ENCODE measurements at regions of chr7 and their contacts with region 1.

Region 1: DNA sequence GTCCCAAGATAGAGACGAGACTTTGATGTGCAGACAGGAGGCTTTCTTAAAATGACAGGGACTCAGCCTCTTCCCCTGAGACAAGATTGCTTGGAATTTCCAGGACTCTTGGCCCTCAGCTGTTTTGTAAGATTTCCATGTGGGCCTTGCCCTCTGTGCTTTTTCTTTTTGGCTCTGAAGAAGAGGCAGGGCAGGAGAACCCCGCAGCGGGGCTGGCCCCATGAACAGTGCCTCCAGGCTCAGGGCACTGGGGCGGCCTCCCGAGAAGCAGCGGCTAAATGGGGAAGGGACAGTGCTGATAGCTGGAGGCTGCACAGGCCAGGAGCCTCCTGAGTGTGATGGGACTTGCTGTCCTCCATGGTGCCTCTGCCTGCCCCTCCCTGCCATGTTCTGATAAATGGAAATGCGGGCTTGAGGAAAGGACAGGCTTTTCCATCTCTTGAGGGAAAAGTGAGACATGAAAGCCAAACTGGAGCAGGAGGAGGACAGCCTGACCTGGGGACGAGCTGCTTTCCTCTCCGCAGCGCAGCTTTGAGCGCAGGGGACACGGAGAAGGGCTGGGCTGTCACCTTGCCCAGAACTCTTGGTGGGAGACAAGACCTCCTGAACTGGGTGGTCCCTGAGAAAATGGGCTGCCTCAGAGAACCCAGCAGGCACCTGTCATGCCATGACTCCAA is 12.1 kb downstream of the SAP25 start:
- DNase-seq: no peak
- H3K4me3 ChIP-seq: no peak overlapping the region
- H3K27ac ChIP-seq: no peak overlapping the region
- H3K4me1 ChIP-seq: no peaks in the 10 kb centered on the region
- H3K27me3 ChIP-seq: no peaks in the 10 kb centered on the region
- CTCF ChIP-seq: no peak
- POLR2A ChIP-seq: no peak

Region 2: DNA sequence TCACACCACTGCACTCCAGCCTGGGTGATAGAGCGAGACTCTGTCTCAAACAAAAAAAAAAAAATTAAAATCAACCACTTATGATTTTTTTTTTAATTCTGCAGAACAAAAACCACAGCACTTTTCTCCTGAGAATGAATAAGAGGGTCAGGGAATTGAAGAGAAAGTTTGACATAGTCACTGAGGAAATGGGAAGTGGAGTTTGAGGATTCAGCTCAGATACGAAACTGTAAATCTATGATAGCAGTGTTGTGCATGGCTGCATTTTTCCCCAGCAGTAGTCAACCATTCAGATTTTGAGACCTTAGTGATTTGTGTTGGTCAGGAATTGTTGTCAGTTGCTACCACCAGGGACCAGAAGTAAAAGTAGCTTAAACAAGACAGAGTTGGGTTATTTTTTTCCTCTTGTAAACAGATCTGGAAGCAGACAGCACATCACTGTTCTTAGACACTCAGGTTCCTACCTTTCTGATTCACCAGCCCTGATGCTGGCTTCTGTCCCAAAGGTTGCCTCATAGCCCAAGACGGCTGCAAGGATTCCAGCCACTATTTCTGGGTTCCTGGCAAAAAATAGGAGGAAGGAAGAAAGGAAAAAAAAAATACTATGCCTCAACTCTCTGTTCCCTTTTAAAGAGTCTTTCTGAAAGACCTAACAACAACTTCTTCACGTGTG is 168.3 kb before region 1 on chr7:
- intact Hi-C with region 1: no loop called
- DNase-seq: no peak
- H3K4me3 ChIP-seq: no peak overlapping the region
- H3K27ac ChIP-seq: no peak overlapping the region
- H3K4me1 ChIP-seq: no peaks in the 10 kb centered on the region
- H3K27me3 ChIP-seq: no peaks in the 10 kb centered on the region
- CTCF ChIP-seq: no peak
- POLR2A ChIP-seq: no peak

Region 3: DNA sequence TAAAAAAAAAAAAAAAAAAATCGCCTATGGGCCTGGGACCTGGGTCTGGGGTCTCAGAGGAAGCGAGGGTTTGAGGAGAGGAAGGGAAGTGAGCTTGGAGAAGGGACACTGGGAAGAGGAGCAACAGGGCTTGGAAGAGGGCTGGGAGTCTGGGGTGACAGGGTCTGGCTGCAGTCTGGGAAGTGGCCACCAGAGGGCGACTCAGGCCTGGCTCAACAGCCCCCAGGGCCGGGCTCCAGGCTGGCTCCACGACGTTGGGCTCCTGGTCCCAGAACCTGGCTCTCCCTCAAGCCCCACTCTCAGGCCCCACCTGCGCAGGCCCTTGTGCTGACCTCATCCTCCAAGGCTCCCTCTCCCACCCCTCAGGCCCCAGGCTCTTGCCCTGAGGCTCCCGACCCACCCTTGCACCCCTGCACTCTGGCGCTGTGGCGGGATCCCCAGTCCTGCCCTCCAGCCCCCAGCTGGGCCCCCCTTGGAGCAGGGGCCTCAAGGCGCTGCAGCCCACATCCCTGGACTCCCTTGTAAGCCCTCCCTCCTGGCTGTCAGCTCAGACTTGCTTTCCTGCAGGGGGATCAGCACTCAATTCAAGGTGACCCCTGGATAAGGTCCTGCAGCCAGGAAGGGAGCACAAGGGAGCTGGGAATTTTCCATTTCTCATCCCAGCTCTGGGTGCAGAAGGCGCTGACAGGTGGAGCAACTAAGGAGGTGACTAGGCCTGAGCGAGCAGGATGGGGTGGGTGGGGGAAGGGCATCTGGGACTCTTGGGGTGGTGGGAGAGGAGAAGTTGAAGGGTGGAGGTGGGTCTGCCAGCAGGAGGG is 92.2 kb before region 1 on chr7:
- intact Hi-C with region 1: loop called (anchors 2 kb)
- DNase-seq: peak; percentile 85
- H3K4me3 ChIP-seq: no peak overlapping the region
- H3K27ac ChIP-seq: peak overlapping the region; percentile 44 to 51
- H3K4me1 ChIP-seq: peaks cover 15% of the 10 kb centered on the region
- H3K27me3 ChIP-seq: no peaks in the 10 kb centered on the region
- CTCF ChIP-seq: peak; percentile 90 to 98 (median 96)
- POLR2A ChIP-seq: no peak

Region 4: GRCh38 chr7:100889761-100890634 is 328.4 kb after region 1 on chr7:
- intact Hi-C with region 1: no loop called
- DNase-seq: peak; percentile 91
- H3K4me3 ChIP-seq: peak overlapping the region; percentile 43 to 54
- H3K27ac ChIP-seq: peak overlapping the region; percentile 96 to 97
- H3K4me1 ChIP-seq: peaks cover 21% of the 10 kb centered on the region
- H3K27me3 ChIP-seq: no peaks in the 10 kb centered on the region
- CTCF ChIP-seq: peak in 1 of 4 experiments; percentile 10
- POLR2A ChIP-seq: peak; percentile 86